A549 (cell line): ENCODE measurements at regions of chr7 and their contacts with region 1.

Region 1: GRCh38 chr7:26078437-26079336 is 73.3 kb upstream of the NFE2L3 start:
- DNase-seq: peak; percentile 69 to 78
- ATAC-seq: peak; percentile 99 to 100
- H3K4me3 ChIP-seq: peak overlapping the region; percentile 34; the same call in 1 of the 3 replicates
- H3K27ac ChIP-seq: no peak overlapping the region
- H3K4me1 ChIP-seq: peaks cover 6% of the 10 kb centered on the region; the same call in 1 of the 3 replicates
- CTCF ChIP-seq: peak; percentile 58
- EP300 ChIP-seq: no peak
- POLR2A ChIP-seq: no peak
- RAD21 ChIP-seq: peak; percentile 63 to 64; a peak in 4 of 5 replicates

Region 2: DNA sequence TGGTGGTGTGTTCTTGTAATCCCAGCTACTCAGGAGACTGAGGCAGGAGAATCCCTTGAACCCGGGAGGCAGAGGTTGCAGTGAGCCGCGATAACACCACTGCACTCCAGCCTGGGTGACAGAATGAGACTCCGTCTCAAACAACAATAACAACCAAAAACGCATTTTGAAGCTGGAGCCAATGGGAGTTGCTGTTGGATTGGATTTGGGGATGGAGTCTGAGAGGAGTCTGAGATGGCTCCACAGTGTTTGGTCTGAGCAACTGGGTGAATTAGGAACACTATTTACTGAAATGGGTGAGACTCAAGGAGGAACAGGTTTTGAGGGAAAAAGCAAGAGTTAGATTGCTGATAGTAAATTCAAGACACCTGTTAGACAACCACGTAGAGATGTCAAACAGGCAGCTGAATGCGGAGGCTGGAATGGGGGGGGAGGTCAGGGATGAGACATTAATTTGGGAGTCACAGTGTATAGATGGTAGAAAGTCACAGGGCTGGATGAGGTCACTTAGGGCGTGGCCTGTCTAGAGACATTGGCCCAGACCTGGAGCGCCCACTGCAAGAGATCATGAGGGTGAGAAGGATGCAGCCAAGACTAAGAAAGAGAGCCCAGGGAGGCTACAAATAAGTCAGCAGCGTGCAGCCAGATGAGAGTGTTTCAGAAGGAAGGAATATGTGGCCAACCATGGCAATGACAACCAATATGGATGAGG is 1010.0 kb before region 1 on chr7:
- CTCF ChIA-PET with region 1: no interaction called
- POLR2A ChIA-PET with region 1: no interaction called
- DNase-seq: peak in 1 of 2 experiments; percentile 28
- ATAC-seq: peak; percentile 27 to 45; a peak in 4 of 6 replicates
- H3K4me3 ChIP-seq: no peak overlapping the region
- H3K27ac ChIP-seq: peak overlapping the region; percentile 63 to 84; a peak in 2 of 6 replicates
- H3K4me1 ChIP-seq: peaks cover 21% of the 10 kb centered on the region
- CTCF ChIP-seq: no peak
- EP300 ChIP-seq: no peak
- POLR2A ChIP-seq: no peak
- RAD21 ChIP-seq: no peak

Region 3: DNA sequence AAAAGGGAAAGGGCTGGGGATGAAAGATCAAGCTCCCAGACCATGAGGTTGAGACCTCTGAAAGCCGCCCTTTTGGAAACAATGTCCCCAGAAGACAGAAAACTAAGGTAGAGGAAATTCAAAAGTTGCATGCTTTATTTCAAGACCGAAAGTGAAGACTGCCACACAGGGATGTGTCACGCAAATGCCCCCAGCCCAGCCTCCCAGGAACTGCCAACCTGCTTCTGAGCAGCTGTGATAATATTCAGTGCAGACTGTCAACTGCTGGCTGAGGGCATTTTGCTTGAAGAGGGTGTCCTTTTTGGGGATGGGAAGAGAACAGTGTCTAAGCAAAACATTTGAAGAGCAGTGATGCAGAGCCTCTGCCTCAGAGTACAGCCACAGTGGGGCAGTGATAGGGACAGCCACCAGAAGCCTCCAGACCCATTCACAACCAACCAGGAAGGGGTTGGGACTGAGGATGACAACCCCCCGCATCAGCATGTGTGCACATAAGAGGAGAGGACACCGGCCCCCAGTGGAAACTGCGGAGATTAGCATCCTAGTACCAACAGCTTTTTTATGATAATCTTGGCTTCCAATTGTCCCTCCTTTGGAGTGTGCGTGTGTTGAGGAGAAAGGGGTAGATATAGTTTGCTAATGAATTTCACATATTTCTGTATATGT is 38.6 kb after region 1 on chr7:
- CTCF ChIA-PET with region 1: no interaction called
- POLR2A ChIA-PET with region 1: no interaction called
- DNase-seq: peak in 1 of 2 experiments; percentile 28
- ATAC-seq: peak; percentile 59 to 79; a peak in 5 of 6 replicates
- H3K4me3 ChIP-seq: no peak overlapping the region
- H3K27ac ChIP-seq: no peak overlapping the region
- H3K4me1 ChIP-seq: no peaks in the 10 kb centered on the region
- CTCF ChIP-seq: no peak
- EP300 ChIP-seq: no peak
- POLR2A ChIP-seq: no peak
- RAD21 ChIP-seq: no peak

Region 4: DNA sequence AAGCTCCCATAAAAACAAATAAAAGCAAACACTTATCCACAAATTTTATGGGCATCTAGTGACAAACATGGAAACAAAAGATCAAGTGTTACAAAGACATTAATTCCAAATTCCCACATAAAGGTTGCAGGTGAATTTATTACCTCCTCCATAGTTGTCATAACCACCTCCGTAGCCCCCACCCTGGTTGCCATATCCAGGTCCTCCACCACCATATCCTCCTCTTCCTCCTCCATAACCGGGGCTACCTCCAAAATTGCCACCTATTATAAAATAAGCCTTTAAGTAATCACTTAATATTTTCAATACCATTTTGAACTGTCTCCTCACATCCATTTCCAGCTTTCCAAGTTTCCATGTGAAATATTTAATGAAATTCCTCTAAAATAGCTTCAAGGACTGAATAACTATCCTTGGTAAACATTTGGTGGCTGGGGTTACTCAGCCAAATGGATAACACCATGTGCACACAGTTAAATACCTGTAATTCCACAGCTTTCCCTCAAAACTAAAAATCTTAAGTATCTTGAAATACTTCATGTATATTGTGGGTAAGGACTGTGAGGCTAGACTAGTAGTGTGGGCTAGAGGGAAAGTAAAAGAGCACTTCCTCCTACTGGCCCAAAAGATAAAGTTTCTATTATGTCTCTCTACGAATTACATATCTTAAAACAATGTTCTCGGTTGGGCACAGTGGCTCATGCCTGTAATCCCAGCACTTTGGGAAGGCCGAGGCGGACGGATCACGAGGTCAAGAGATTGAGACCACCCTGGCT is 114.9 kb after region 1 on chr7:
- CTCF ChIA-PET with region 1: interaction called, 23 read pairs
- POLR2A ChIA-PET with region 1: no interaction called
- DNase-seq: no peak
- ATAC-seq: peak in 1 of 2 experiments; percentile 18; a peak in 3 of 6 replicates
- H3K4me3 ChIP-seq: peak overlapping the region; percentile 89
- H3K27ac ChIP-seq: no peak overlapping the region
- H3K4me1 ChIP-seq: peaks cover 84% of the 10 kb centered on the region
- CTCF ChIP-seq: no peak
- EP300 ChIP-seq: no peak
- POLR2A ChIP-seq: no peak
- RAD21 ChIP-seq: no peak